PC-9 (cell line): ENCODE measurements at regions of chr1 and their contacts with region 1.

Region 1: GRCh38 chr1:21876267-21876666 is 60.8 kb downstream of the HSPG2 start:
- DNase-seq: no peak
- H3K4me3 ChIP-seq: no peak overlapping the region
- H3K27ac ChIP-seq: no peak overlapping the region
- H3K4me1 ChIP-seq: peaks cover 16% of the 10 kb centered on the region; the same call in 1 of the 2 replicates
- H3K27me3 ChIP-seq: no peaks in the 10 kb centered on the region
- CTCF ChIP-seq: no peak

Region 2: DNA sequence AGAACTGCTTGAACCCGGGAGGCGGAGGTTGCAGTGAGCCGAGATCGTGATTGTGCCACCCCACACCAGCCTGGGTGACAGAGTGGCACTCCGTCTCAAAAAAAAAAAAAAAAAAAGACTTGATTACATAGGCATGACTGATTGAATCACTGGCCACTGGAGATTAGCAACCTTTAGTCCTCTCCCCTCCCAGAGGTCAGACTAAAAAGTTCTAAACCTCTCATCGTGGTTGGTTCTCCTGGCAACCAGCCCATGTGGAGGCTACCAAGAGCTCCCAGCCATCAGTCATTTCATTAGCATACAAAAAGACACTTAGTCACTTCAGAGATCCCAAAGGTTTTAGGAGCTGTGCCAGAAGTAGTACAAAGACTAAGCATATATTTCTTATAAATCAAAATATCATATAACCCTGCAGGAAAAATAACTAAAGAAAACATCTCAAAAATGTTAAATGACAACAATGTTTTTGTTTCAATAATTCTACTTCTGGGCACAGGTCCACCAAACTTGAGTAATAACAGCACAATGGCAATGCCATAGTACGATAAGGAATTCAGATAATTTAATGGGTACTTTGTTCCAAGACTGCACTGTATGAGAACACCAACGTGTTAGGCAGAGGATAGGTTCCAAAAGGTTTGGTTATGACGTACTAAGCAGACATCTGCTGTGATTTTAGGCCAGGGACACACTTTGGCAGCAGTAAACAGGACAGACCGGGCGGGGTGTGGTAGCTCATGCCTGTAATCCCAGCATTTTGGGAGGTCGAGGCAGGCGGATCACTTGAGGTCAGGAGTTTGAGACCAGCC is 111.4 kb before region 1 on chr1:
- CTCF ChIA-PET with region 1: no interaction called
- POLR2A ChIA-PET with region 1: interaction called, 25 read pairs
- intact Hi-C with region 1: no loop called
- DNase-seq: peak; percentile 88 to 96
- H3K4me3 ChIP-seq: no peak overlapping the region
- H3K27ac ChIP-seq: peak overlapping the region; percentile 60
- H3K4me1 ChIP-seq: peaks cover 26% of the 10 kb centered on the region
- H3K27me3 ChIP-seq: no peaks in the 10 kb centered on the region
- CTCF ChIP-seq: no peak